SK-N-SH (cell line): ENCODE measurements at regions of chr15 and their contacts with region 1.

Region 1: DNA sequence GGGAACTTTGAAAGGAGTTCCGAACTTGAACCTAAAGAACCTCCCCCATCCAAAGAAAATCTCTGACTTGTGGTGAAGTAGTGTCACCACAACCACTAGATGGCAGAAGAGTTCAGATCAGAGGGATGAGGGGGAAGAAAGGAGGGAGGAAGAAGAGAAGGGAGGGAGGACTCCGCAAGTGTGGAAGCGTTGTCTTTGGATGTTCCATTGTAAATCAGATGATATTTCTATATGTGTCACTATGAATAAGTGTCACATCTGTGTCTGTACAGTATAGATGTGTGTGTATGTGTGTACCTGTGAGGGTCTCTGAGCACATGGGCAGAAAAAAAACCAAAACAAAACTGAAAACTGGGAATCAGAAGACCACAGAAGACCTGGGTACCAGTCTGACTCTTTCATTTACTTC is 16.9 kb downstream of the SLC24A1 start:
- DNase-seq: peak; percentile 79
- H3K4me3 ChIP-seq: no peak overlapping the region; a peak in 1 of 4 replicates
- H3K27ac ChIP-seq: no peak overlapping the region
- H3K4me1 ChIP-seq: peaks cover 0 to 7% of the 10 kb centered on the region in 2 experiments; a peak in 1 of 4 replicates
- H3K27me3 ChIP-seq: no peaks in the 10 kb centered on the region
- CTCF ChIP-seq: peak; percentile 86
- EP300 ChIP-seq: no peak
- RAD21 ChIP-seq: peak; percentile 90

Region 2: DNA sequence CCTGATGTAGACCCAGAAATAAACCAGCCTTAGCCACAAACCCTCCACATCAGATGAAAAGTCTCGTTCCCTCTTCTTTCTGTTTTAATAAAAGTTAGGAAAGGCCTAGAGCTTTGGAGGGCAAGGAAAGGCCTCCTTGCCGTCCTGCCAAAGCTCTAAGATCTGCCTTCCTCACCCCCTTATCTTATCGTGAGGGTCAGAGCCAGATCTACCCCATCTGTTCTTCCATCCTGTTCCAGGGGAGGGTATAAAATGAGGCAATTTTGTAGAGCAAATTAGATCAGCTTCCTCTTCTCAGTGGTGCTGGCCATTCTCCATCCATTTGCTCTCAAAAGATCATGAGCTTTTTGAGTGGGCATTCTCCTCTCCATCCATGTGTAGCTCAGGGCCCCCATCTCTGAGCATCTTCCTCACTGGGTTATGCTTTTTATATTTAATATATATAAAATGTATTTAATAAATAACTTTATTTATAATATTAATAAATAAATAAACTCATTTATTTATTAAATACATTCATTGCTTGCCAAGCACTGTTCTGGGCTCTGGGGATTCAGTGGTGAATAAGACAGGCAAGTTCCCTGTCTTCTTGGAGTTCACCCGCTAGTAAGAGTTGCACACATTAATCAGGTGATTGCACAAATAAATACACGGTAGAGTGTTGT is 18.9 kb before region 1 on chr15:
- CTCF ChIA-PET with region 1: interaction called, 19 read pairs
- POLR2A ChIA-PET with region 1: no interaction called
- DNase-seq: peak; percentile 36
- H3K4me3 ChIP-seq: no peak overlapping the region
- H3K27ac ChIP-seq: peak overlapping the region in 1 of 2 experiments; percentile 61; a peak in 2 of 4 replicates
- H3K4me1 ChIP-seq: peaks cover 0 to 4% of the 10 kb centered on the region in 2 experiments; a peak in 2 of 4 replicates
- H3K27me3 ChIP-seq: no peaks in the 10 kb centered on the region
- CTCF ChIP-seq: no peak
- EP300 ChIP-seq: no peak
- RAD21 ChIP-seq: no peak

Region 3: DNA sequence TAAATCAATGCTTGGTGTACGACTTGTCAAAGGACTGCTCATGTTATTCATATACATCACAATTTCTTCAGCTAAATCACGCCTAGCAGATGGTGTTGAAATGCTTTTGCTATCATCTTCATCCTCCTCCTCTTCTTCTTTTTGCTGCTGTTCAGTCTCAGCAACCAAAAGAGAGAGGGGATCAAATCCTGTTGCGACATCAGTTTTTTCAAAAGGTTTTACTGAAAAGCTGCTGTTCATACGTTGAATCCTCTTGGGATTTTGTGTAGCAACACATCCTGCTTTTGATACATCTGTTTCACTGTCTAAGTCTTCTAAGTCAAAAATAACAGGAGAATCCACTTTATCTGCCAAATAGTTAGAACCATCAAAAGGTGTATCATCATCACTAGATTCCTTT is 52.1 kb after region 1 on chr15:
- CTCF ChIA-PET with region 1: no interaction called
- POLR2A ChIA-PET with region 1: no interaction called
- DNase-seq: no peak
- H3K4me3 ChIP-seq: no peak overlapping the region
- H3K27ac ChIP-seq: no peak overlapping the region
- H3K4me1 ChIP-seq: no peaks in the 10 kb centered on the region; a peak in 1 of 4 replicates
- H3K27me3 ChIP-seq: no peaks in the 10 kb centered on the region
- CTCF ChIP-seq: no peak
- EP300 ChIP-seq: no peak
- RAD21 ChIP-seq: no peak

Region 4: DNA sequence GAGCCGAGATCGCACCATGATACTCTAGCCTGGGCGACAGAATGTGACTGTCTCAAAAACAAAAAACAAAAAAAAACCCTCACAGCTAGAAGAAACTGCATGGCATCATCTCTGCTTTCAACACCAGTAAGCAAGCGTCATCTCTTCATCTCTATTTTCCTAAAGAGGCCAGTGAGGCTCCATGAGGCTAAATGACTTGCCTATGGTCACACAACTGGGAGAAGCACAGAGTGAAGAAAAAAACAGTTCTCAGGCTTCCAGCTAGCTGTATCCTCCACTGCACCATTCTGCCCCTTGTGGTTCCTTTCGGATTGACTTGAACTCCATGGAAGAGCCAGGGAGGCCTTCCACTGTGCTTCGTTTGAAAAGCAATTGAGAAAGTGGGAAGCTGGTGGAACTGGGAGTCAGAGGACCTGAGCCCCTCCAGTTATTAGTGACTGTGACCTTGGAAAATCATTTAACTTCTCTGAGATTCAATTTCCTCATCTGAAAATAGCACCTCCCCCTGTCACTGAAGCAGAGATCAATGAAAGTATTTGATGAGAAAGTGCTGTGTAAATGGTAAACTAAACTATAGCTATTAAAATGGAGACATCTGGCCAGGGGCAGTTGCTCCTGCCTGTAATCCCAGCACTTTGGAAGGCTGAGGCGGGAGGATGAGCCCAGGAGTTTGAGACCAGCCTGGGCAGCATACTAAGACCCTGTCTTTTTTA is 185.5 kb after region 1 on chr15:
- CTCF ChIA-PET with region 1: interaction called, 85 read pairs
- POLR2A ChIA-PET with region 1: no interaction called
- DNase-seq: peak; percentile 71
- H3K4me3 ChIP-seq: no peak overlapping the region
- H3K27ac ChIP-seq: no peak overlapping the region
- H3K4me1 ChIP-seq: no peaks in the 10 kb centered on the region; a peak in 1 of 4 replicates
- H3K27me3 ChIP-seq: no peaks in the 10 kb centered on the region
- CTCF ChIP-seq: peak; percentile 66
- EP300 ChIP-seq: no peak
- RAD21 ChIP-seq: peak; percentile 77

Region 5: GRCh38 chr15:65856821-65857455 is 218.3 kb after region 1 on chr15:
- CTCF ChIA-PET with region 1: interaction called, 31 read pairs
- POLR2A ChIA-PET with region 1: no interaction called
- DNase-seq: peak; percentile 42
- H3K4me3 ChIP-seq: no peak overlapping the region
- H3K27ac ChIP-seq: no peak overlapping the region
- H3K4me1 ChIP-seq: no peaks in the 10 kb centered on the region
- H3K27me3 ChIP-seq: no peaks in the 10 kb centered on the region
- CTCF ChIP-seq: peak; percentile 84
- EP300 ChIP-seq: no peak
- RAD21 ChIP-seq: peak; percentile 49